ENCODE measurements at regions of chr18 and their contacts with region 1.

Region 1: GRCh38 chr18:57461652-57462269 is 26.6 kb downstream of the ONECUT2 start:
- DNase-seq: no peak
- ATAC-seq: no peak
- H3K4me3 ChIP-seq: no peak overlapping the region
- H3K27ac ChIP-seq: no peak overlapping the region
- H3K4me1 ChIP-seq: peaks cover 6% of the 10 kb centered on the region; the same call in 1 of the 2 replicates
- H3K27me3 ChIP-seq: no peaks in the 10 kb centered on the region
- CTCF ChIP-seq: no peak

Region 2: GRCh38 chr18:57410749-57411148 is 51.0 kb before region 1 on chr18:
- CTCF ChIA-PET with region 1: no interaction called
- POLR2A ChIA-PET with region 1: no interaction called
- intact Hi-C with region 1: no loop called
- DNase-seq: no peak
- ATAC-seq: no peak
- H3K4me3 ChIP-seq: no peak overlapping the region
- H3K27ac ChIP-seq: no peak overlapping the region
- H3K4me1 ChIP-seq: no peaks in the 10 kb centered on the region
- H3K27me3 ChIP-seq: peaks cover 31% of the 10 kb centered on the region
- CTCF ChIP-seq: no peak

Region 3: GRCh38 chr18:57561728-57562423 is 100.1 kb after region 1 on chr18:
- CTCF ChIA-PET with region 1: no interaction called
- POLR2A ChIA-PET with region 1: no interaction called
- intact Hi-C with region 1: loop called (anchors 5 kb)
- DNase-seq: peak; percentile 57
- ATAC-seq: 0 out of 2 replicates have a peak, but pooled peaks have one; percentile 42
- H3K4me3 ChIP-seq: no peak overlapping the region
- H3K27ac ChIP-seq: no peak overlapping the region
- H3K4me1 ChIP-seq: no peaks in the 10 kb centered on the region
- H3K27me3 ChIP-seq: no peaks in the 10 kb centered on the region
- CTCF ChIP-seq: peak; percentile 93